GM13976 (cell line): ENCODE measurements at regions of chr9 and their contacts with region 1.

Region 1: GRCh38 chr9:110058304-110058953 is 149.5 kb downstream of the C9orf152 start:
- DNase-seq: peak; percentile 40
- CTCF ChIP-seq: peak; percentile 54

Region 2: DNA sequence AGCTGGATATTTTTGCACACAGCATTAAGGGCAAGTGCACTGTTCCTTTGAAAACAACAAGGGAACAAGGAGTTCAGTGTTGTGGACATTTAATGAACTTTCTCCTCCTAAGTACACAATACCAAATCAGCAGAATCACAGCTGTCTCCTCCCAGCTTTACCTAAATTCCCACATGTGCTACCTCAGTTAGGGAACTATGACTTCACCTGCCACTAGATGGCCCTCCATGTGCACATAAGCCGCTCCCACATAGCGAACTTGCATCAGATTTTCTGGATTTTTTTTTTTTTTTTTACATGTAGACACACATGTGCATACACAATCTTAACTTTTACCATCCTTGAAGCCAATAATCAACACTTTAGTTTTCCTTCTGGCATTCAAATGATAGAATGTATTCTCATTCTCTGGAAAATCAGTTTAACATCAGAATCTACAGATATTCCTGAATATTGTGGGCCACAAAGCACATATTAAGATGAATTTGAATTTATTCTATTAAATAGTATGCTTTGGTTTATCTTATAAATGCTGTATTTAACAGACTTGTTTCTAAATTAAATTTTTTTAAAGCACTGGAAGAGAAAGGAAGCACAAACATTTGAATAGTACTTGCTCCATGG is 154.8 kb before region 1 on chr9:
- in situ Hi-C with region 1: loop called (anchors 5 kb)
- DNase-seq: peak; percentile 56
- CTCF ChIP-seq: peak; percentile 72

Region 3: GRCh38 chr9:109972026-109972882 is 86.2 kb before region 1 on chr9:
- in situ Hi-C with region 1: loop called (anchors 10 kb)
- DNase-seq: no peak
- CTCF ChIP-seq: peak; percentile 15

Region 4: DNA sequence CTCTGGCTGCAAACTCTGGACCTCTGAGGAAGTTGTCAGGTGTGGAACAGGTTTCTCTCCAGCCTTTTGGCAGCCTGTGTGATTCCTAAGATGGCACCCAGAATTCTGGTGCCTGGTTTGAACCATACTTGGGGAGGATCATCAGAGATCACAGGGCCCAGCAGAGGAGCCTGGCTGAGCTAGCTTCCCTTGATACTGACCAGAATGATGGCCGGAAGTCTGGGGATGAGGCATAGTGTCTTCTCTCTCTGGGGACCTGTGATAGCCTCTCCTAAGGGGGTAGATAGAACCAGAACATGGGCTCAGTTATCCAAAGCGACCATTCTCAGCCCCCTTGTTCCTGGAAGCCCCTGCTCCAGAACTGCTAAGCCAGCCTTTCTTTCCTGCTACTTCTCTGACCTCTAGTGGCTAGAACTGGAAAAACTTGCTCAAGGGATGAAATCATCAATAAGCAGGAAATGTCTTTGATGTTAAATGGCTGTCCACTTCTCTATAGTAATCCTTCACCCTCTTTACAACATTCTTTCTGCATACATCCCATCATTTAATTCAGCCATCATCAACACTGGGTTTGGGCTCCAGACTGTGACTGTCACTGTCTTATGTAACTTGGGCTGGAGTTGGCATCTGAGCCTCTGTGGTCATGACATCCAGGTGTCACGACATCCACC is 94.4 kb after region 1 on chr9:
- in situ Hi-C with region 1: loop called (anchors 10 kb)
- DNase-seq: no peak
- CTCF ChIP-seq: peak; percentile 62

Region 5: GRCh38 chr9:110821064-110821463 is 762.6 kb after region 1 on chr9:
- in situ Hi-C with region 1: no loop called
- DNase-seq: peak; percentile 39
- CTCF ChIP-seq: no peak